ENCODE measurements at regions of chr4 and their contacts with region 1.

Region 1: GRCh38 chr4:113394730-113395530 is 345.5 kb downstream of the ANK2 start:
- DNase-seq: peak; percentile 55 to 75 (median 73)
- H3K4me3 ChIP-seq: no peak overlapping the region
- H3K4me3 Mint-ChIP-seq: no peak overlapping the region
- H3K27ac ChIP-seq: no peak overlapping the region
- H3K27ac Mint-ChIP-seq: no peak overlapping the region
- H3K4me1 ChIP-seq: no peaks in the 10 kb centered on the region
- H3K4me1 Mint-ChIP-seq: peaks cover 0 to 4% (median 0%) of the 10 kb centered on the region in 4 donors
- H3K27me3 ChIP-seq: peaks cover 6% of the 10 kb centered on the region
- H3K27me3 Mint-ChIP-seq: no peaks in the 10 kb centered on the region

Region 2: DNA sequence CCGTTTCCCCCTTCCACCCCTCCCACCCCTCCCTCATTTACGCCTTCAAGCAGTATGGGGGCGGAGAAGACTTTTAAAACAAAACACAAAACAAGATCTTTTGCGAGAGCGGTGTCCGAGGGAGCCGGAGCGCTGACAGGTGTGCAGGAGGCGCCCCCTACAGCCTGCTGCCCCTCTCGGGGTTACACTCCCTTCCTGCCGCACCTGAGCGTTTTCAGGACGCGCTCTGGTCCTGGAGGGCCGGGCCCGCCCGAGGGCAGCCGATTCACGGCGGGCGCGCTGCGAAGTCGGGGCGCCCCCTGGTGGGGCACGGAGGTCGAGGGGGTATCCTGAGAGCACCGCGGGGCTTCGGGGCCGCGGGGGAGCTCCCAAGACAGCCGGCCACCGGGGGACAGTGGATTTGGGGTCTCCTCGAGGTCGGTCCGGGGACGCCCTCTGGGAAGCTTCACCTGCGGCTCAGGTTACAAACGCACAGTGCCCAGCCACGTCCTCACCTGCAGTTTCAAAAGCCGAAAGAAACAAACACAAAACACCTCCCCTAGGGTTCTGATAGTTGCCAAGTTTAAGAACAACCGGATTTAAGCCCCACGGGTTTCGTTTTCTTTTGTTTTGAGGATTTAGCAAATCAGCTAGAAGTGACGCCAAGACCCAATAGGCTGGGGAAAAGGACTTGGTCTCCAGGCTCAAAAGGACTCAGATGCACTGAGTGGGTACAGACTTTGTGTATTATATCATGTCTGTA is 871.0 kb before region 1 on chr4:
- CTCF ChIA-PET with region 1: no interaction called
- POLR2A ChIA-PET with region 1: no interaction called
- intact Hi-C with region 1: no loop called
- DNase-seq: peak; percentile 66 to 74 (median 67)
- H3K4me3 ChIP-seq: peak overlapping the region; percentile 20 to 46
- H3K4me3 Mint-ChIP-seq: peak overlapping the region; percentile 81 to 94 (median 86)
- H3K27ac ChIP-seq: no peak overlapping the region
- H3K27ac Mint-ChIP-seq: peak overlapping the region in 1 of 7 donors; percentile 65
- H3K4me1 ChIP-seq: peaks cover 24% of the 10 kb centered on the region
- H3K4me1 Mint-ChIP-seq: peaks cover 9 to 51% (median 19%) of the 10 kb centered on the region in 4 donors
- H3K27me3 ChIP-seq: peaks cover 45% of the 10 kb centered on the region
- H3K27me3 Mint-ChIP-seq: peaks cover 44 to 46% of the 10 kb centered on the region in 2 donors

Region 3: GRCh38 chr4:112895811-112896608 is 498.9 kb before region 1 on chr4:
- CTCF ChIA-PET with region 1: no interaction called
- POLR2A ChIA-PET with region 1: no interaction called
- intact Hi-C with region 1: no loop called
- DNase-seq: no peak
- H3K4me3 ChIP-seq: no peak overlapping the region
- H3K4me3 Mint-ChIP-seq: no peak overlapping the region
- H3K27ac ChIP-seq: no peak overlapping the region
- H3K27ac Mint-ChIP-seq: no peak overlapping the region
- H3K4me1 ChIP-seq: no peaks in the 10 kb centered on the region
- H3K4me1 Mint-ChIP-seq: peaks cover 0 to 4% (median 0%) of the 10 kb centered on the region in 4 donors
- H3K27me3 ChIP-seq: no peaks in the 10 kb centered on the region
- H3K27me3 Mint-ChIP-seq: peaks cover 5 to 9% of the 10 kb centered on the region in 2 donors

Region 4: GRCh38 chr4:113781439-113782040 is 386.6 kb after region 1 on chr4:
- CTCF ChIA-PET with region 1: no interaction called
- POLR2A ChIA-PET with region 1: no interaction called
- intact Hi-C with region 1: loop called (anchors 5 kb)
- DNase-seq: peak in 4 of 5 donors; percentile 25 to 35 (median 30)
- H3K4me3 ChIP-seq: no peak overlapping the region
- H3K4me3 Mint-ChIP-seq: no peak overlapping the region
- H3K27ac ChIP-seq: no peak overlapping the region
- H3K27ac Mint-ChIP-seq: no peak overlapping the region
- H3K4me1 ChIP-seq: no peaks in the 10 kb centered on the region
- H3K4me1 Mint-ChIP-seq: peaks cover 0 to 8% (median 2%) of the 10 kb centered on the region in 4 donors
- H3K27me3 ChIP-seq: no peaks in the 10 kb centered on the region
- H3K27me3 Mint-ChIP-seq: peaks cover 0 to 1% of the 10 kb centered on the region in 2 donors

Region 5: DNA sequence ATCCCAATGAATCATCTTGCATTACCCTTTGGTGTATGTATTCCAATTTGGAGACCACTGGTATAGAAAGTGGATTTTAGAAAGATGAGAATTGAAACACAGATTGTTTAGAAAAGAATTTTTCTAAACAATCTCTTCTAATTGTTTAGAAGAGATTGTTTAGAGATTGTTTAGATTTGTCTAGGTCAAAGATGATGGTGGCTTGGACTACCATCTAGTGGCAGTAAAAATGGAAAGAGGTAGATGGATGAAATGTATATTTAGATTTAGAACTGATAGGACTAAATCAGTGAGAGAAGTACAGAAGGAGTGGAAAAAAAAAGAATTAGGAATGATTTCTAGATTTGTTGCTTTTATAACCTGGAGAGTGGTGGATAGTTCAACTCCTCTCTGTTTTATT is 513.9 kb after region 1 on chr4:
- CTCF ChIA-PET with region 1: interaction called, 4 read pairs
- POLR2A ChIA-PET with region 1: no interaction called
- intact Hi-C with region 1: loop called (anchors 1 kb)
- DNase-seq: peak; percentile 12 to 36 (median 24)
- H3K4me3 ChIP-seq: no peak overlapping the region
- H3K4me3 Mint-ChIP-seq: no peak overlapping the region
- H3K27ac ChIP-seq: no peak overlapping the region
- H3K27ac Mint-ChIP-seq: peak overlapping the region in 1 of 7 donors; percentile 14
- H3K4me1 ChIP-seq: peaks cover 28% of the 10 kb centered on the region
- H3K4me1 Mint-ChIP-seq: peaks cover 13 to 36% (median 21%) of the 10 kb centered on the region in 4 donors
- H3K27me3 ChIP-seq: no peaks in the 10 kb centered on the region
- H3K27me3 Mint-ChIP-seq: no peaks in the 10 kb centered on the region

Region 6: GRCh38 chr4:114072781-114073180 is 677.9 kb after region 1 on chr4:
- CTCF ChIA-PET with region 1: interaction called, 45 read pairs
- POLR2A ChIA-PET with region 1: no interaction called
- intact Hi-C with region 1: loop called (anchors 1 kb)
- DNase-seq: no peak
- H3K4me3 ChIP-seq: no peak overlapping the region
- H3K4me3 Mint-ChIP-seq: no peak overlapping the region
- H3K27ac ChIP-seq: no peak overlapping the region
- H3K27ac Mint-ChIP-seq: no peak overlapping the region
- H3K4me1 ChIP-seq: no peaks in the 10 kb centered on the region
- H3K4me1 Mint-ChIP-seq: peaks cover 0 to 5% (median 3%) of the 10 kb centered on the region in 4 donors
- H3K27me3 ChIP-seq: no peaks in the 10 kb centered on the region
- H3K27me3 Mint-ChIP-seq: peaks cover 0 to 1% of the 10 kb centered on the region in 2 donors

Region 7: DNA sequence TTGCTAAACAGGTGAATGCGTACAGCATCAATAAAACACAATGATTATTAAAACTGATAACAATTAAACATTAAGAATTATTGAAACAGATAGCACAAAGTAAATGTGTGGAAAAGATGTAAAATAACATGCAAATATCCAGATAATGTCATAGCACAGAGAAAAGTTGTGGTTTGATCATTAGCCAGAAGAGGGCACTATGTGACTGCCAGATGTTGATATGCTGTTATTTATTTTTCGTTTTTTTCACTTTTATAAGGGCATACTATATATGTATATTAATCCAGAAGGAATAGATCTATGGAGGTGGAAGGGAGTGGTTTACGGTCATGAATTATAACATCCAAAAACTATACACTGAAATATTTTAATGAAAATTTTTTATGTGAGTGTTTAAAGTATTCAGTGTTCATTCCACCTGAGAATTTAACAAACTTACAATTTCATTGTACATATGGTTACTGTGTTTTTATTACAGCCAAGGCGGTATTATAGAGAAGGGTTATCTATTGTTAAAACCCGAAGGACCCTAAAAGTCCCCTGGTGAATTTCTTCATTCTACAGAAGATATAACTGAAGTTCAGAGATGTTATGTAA is 991.8 kb after region 1 on chr4:
- CTCF ChIA-PET with region 1: interaction called, 9 read pairs
- POLR2A ChIA-PET with region 1: no interaction called
- intact Hi-C with region 1: loop called (anchors 1 kb)
- DNase-seq: peak in 4 of 5 donors; percentile 4 to 16 (median 6)
- H3K4me3 ChIP-seq: no peak overlapping the region
- H3K4me3 Mint-ChIP-seq: no peak overlapping the region
- H3K27ac ChIP-seq: no peak overlapping the region
- H3K27ac Mint-ChIP-seq: no peak overlapping the region
- H3K4me1 ChIP-seq: no peaks in the 10 kb centered on the region
- H3K4me1 Mint-ChIP-seq: no peaks in the 10 kb centered on the region
- H3K27me3 ChIP-seq: no peaks in the 10 kb centered on the region
- H3K27me3 Mint-ChIP-seq: peaks cover 3 to 4% of the 10 kb centered on the region in 2 donors

Region 8: DNA sequence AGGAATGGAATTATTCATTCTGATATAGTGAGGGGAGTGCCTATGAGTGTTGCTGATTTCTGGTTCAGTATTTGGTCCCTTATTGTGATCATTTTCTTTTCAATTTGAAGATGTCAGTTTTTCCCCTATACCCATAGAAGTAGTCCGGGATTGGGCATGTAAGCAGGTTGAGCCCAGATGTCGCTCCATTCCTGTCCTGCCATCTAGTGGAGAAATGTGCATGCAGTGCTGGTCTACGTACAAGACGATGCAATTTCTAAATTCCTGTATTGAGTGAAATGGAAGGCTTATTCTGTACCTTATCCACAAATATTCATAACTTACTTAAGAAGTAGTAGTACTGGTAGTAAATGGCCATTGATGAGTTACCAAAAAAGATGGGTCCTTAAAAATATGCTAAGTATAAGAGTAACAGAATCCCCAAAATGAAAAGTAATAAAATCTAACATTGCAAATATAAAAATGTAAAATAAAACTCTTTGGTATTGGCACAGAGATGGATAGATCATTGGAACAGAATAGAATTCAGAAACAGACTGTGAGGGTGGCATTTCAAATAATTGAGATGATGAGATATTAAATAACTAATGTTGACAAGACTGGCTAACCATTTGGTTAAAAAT is 1264.6 kb after region 1 on chr4:
- CTCF ChIA-PET with region 1: interaction called, 14 read pairs
- POLR2A ChIA-PET with region 1: interaction called, 3 read pairs
- intact Hi-C with region 1: loop called (anchors 1 kb)
- DNase-seq: peak; percentile 17 to 25 (median 22)
- H3K4me3 ChIP-seq: no peak overlapping the region
- H3K4me3 Mint-ChIP-seq: no peak overlapping the region
- H3K27ac ChIP-seq: no peak overlapping the region
- H3K27ac Mint-ChIP-seq: no peak overlapping the region
- H3K4me1 ChIP-seq: no peaks in the 10 kb centered on the region
- H3K4me1 Mint-ChIP-seq: no peaks in the 10 kb centered on the region
- H3K27me3 ChIP-seq: no peaks in the 10 kb centered on the region
- H3K27me3 Mint-ChIP-seq: peaks cover 0 to 7% of the 10 kb centered on the region in 2 donors

Region 9: DNA sequence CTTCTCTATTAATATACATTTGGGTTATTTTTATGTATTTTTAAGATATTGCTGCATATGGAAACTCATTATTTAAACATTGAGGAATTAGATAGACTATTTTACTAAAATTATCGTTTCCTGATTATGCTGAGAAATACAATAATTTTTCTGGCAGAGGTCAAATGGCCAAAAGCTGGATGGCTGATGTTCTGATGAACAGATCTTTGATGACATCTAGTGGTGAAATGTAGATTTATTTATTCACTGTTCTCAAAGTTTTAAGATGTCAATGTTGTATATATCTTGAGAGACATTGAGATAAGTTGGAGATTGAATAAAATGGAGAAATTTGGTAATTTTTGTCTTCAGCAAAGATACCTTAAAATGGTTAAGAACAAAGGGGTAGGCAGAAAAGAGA is 1299.8 kb after region 1 on chr4:
- CTCF ChIA-PET with region 1: interaction called, 7 read pairs
- POLR2A ChIA-PET with region 1: no interaction called
- intact Hi-C with region 1: loop called (anchors 1 kb)
- DNase-seq: peak in 4 of 5 donors; percentile 6 to 19 (median 12)
- H3K4me3 ChIP-seq: no peak overlapping the region
- H3K4me3 Mint-ChIP-seq: no peak overlapping the region
- H3K27ac ChIP-seq: no peak overlapping the region
- H3K27ac Mint-ChIP-seq: no peak overlapping the region
- H3K4me1 ChIP-seq: no peaks in the 10 kb centered on the region
- H3K4me1 Mint-ChIP-seq: no peaks in the 10 kb centered on the region
- H3K27me3 ChIP-seq: peaks cover 3% of the 10 kb centered on the region
- H3K27me3 Mint-ChIP-seq: peaks cover 3 to 4% of the 10 kb centered on the region in 2 donors